Left ventricle myocardium superior (tissue), 1 donor: ENCODE measurements at regions of chr15 and their contacts with region 1.

Region 1: DNA sequence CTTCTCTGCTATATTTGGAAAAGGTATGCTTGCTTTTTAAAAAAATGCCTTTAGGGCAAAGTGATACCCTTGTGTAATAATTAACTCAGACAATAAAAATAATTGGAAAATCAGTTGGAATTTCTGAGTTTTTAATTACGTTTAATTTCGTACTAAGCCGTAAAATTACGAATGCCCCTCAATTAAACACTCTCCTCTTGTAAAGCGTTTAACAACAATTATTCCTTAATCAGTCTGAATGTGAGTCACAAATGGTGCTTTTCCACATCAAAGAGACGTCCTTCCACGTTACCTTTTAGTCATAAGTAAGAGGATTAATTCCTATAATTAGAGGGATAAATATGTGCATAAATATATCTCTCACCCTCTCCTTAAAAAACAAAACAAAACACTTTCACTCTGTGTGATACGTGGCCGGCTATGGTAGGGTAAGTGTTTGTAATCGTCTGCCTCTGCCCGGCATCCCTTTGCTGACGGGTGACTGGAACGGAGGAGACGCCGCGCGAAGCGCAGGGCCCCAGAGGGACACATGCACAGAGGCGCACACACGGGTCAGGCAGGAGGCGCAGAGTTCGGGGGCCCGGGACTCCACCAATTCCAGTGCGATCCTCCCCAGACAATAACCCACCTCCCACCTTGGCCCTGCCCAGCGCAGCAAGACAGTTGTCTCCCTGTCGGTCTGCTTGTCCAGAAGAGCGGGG is 9.7 kb upstream of the MEIS2 start:
- DNase-seq: peak; percentile 77
- ATAC-seq: peak; percentile 87

Region 2: GRCh38 chr15:36883713-36884517 is 226.1 kb before region 1 on chr15:
- intact Hi-C with region 1: loop called (anchors 5 kb)
- DNase-seq: peak; percentile 91
- ATAC-seq: peak; percentile 93

Region 3: DNA sequence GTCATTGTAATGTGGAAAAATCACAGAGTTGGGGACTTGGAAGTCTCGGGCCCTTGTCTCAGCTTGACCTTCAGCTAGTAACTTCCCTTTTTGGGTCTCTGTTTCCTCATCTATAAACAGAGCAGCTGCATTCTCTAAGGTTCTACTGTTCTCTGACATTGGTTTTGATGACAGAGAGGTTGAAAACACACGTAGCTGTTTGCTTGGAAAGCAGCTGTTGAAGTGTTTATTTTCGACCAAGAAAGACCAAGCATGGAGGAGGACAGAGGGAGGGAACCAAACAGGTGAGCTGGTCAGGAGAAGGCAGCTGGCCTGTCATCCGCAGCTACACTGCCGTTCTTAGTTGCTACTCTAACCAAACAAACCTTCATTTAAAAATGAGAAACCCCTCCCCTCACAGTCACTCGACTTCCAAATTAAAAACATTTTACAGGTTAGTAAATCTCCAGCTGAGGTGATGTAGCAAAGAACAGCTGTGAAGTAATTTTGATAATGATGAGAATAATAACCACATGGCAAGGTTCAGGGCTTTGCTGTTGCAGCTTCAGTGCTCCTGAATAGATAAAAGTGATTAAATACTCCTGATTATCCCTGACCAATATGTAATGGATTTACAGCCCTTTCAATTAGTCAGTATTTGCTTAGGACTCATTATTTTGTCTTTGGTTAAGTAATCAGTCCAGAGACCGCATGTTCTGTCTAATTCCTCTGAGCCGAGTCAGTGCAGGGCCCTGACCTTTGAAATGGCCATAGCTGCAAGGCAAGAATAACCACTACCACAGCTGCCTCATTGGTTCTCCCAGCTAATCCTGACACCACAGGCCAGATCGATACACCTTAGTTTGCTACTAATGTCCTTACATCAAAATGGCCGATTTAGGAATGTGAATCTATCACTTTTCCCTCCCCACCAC is 74.9 kb before region 1 on chr15:
- intact Hi-C with region 1: no loop called
- DNase-seq: no peak
- ATAC-seq: no peak

Region 4: GRCh38 chr15:37045859-37046740 is 63.9 kb before region 1 on chr15:
- intact Hi-C with region 1: no loop called
- DNase-seq: peak; percentile 31
- ATAC-seq: peak; percentile 68